Activated B cell treated with CpG ODN at 0.5 μM for 24 hours (primary cell): ENCODE measurements at regions of chr6 and their contacts with region 1.

Region 1: DNA sequence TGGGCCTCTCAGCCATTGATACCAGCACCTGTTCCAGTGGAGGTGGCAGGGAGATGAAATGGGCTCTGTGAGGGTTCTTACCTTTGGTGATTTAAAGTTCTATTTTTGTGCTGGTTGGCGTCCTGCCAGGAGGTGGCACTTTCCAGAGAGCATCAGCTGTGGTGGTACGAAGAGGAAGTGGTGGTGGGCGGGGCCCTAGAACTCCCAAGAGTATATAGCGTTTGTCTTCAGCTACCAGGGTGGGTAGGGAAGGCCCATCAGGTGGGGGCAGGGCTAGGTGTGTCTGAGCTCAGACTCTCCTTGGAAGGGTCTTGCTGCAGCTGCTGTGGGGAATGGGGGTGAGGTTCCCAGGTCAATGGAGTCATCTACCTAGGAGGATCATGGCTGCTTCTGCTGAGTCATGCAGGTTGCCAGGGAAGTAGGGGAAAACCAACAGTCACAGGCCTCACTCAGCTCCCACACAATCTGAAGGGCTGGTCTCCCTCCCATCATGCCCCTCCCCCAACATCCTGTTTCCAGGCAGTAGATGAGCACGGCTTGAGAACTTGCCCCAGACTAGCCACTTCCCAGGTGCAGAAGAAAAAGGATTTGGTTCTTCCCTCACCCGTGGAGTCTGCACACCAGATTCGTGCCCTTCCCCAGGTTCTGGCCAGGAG is 46.6 kb downstream of the MOXD1 start:
- DNase-seq: peak; percentile 80
- ATAC-seq: peak; percentile 92
- H3K4me3 Mint-ChIP-seq: peak overlapping the region; percentile 77
- H3K27ac Mint-ChIP-seq: peak overlapping the region; percentile 92
- H3K4me1 Mint-ChIP-seq: peaks cover 74% of the 10 kb centered on the region
- H3K27me3 Mint-ChIP-seq: no peaks in the 10 kb centered on the region
- CTCF ChIP-seq: no peak

Region 2: DNA sequence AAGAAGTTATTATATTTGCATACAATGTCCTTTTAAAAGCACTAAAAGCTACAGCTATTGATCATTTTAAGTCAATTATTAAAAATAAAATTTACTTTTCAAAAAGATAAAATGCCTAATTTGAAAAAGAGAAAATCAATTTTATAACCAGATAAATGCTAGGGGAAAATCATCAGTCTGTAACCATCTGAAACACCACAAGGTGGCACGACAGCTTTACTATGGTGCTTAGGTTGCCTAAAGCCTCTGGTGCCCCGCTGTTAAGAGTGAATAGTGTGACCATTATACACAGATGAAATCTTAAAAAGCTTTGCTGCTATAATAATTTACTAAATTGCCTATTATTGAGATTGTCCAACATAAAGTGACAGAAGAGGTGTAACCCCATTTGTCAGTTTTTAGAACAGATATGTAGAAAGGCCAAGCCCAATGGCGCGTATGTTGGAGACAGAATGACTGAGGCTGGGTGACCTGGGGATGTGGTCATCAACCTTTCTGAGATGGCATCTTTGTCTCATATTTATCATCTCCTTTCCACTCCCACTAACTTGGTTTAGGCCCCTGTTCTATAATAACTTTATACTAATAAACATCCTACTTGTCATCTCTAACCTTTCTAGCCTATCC is 54.2 kb before region 1 on chr6:
- CTCF ChIA-PET with region 1: interaction called, 14 read pairs
- POLR2A ChIA-PET with region 1: interaction called, 3 read pairs
- intact Hi-C with region 1: loop called (anchors 1 kb)
- DNase-seq: no peak
- ATAC-seq: peak; percentile 98
- H3K4me3 Mint-ChIP-seq: no peak overlapping the region
- H3K27ac Mint-ChIP-seq: no peak overlapping the region
- H3K4me1 Mint-ChIP-seq: no peaks in the 10 kb centered on the region
- H3K27me3 Mint-ChIP-seq: no peaks in the 10 kb centered on the region
- CTCF ChIP-seq: peak; percentile 67

Region 3: DNA sequence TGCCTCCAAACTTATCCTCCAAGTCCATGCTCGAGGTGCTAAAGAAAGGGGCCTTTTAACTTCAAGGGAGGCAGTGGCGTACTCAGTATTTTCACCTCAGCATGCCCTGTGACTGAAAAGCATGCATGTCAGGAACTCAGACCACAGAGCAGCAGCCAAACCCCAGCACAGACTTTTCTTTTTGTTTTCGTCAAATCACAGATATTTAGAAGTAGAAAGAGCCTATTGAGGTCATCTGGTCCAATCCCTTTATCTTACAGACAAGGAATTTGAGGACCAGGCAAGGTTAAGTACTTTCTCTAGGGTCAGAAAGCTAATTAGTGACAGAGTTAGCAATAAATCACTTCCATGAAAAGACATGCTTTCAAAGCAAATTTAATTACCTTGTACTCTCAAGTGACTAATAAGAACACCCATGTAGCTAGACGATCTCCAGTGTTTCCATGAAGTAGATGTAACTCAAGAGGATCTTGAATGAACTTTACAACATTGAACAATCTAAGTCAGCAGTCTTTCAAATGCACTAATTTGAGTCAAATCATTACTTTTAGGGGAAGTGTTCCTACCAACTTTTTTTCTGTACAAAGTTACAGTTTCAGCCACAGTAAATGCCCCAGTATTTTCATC is 10.8 kb after region 1 on chr6:
- CTCF ChIA-PET with region 1: interaction called, 6 read pairs
- POLR2A ChIA-PET with region 1: interaction called, 20 read pairs
- intact Hi-C with region 1: loop called (anchors 1 kb)
- DNase-seq: no peak
- ATAC-seq: peak; percentile 83
- H3K4me3 Mint-ChIP-seq: peak overlapping the region; percentile 44
- H3K27ac Mint-ChIP-seq: peak overlapping the region; percentile 82
- H3K4me1 Mint-ChIP-seq: peaks cover 61% of the 10 kb centered on the region
- H3K27me3 Mint-ChIP-seq: no peaks in the 10 kb centered on the region
- CTCF ChIP-seq: no peak

Region 4: GRCh38 chr6:132380358-132381029 is 25.9 kb after region 1 on chr6:
- CTCF ChIA-PET with region 1: interaction called, 9 read pairs
- POLR2A ChIA-PET with region 1: interaction called, 9 read pairs
- intact Hi-C with region 1: loop called (anchors 1 kb)
- DNase-seq: no peak
- ATAC-seq: no peak
- H3K4me3 Mint-ChIP-seq: no peak overlapping the region
- H3K27ac Mint-ChIP-seq: no peak overlapping the region
- H3K4me1 Mint-ChIP-seq: peaks cover 23% of the 10 kb centered on the region
- H3K27me3 Mint-ChIP-seq: no peaks in the 10 kb centered on the region
- CTCF ChIP-seq: no peak

Region 5: GRCh38 chr6:132391391-132392271 is 37.0 kb after region 1 on chr6:
- CTCF ChIA-PET with region 1: interaction called, 32 read pairs
- POLR2A ChIA-PET with region 1: interaction called, 15 read pairs
- intact Hi-C with region 1: loop called (anchors 1 kb)
- DNase-seq: no peak
- ATAC-seq: no peak
- H3K4me3 Mint-ChIP-seq: no peak overlapping the region
- H3K27ac Mint-ChIP-seq: no peak overlapping the region
- H3K4me1 Mint-ChIP-seq: peaks cover 29% of the 10 kb centered on the region
- H3K27me3 Mint-ChIP-seq: peaks cover 4% of the 10 kb centered on the region
- CTCF ChIP-seq: no peak

Region 6: DNA sequence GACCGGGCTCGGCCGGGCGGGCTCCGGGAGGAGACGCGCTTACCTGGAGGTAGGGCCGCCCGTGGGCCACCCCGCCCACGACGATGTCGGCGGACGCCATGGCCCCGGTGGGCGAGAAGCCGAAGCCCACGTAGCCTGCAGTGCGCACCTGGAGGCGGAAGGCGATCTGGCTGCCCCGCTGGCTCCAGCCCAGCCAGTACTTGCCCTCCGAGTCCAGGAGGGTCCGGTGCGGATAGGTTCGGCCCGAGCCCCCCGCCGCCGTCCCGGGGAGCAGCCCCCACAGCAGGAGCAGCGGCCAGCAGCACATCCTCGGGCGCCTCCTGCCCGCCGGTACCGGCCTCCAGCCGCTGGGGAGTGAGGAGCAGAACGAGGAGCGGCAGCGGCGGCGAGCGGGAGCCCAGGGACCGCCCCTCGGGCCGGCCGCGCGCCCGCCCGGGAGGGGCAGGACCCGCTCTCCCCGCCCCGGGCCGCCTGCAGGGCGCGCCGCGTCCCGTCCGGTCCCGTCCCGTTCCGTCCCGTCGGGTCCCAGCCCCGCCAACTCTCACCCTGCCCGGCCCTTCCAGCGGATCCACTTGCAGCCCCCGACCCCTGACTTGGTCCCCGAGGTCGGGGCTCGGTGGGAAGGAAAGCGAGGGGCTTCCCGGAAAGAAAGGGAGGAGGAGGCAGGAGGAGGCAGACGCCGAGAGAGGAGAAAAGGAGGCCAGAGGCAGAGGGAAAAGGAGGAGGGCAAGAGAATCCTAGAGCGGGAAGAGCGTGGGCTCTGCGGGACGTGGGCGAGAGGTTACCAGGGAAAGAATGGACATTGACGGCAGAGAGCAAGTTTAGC is 46.7 kb after region 1 on chr6 and contains the start of gene MOXD1:
- CTCF ChIA-PET with region 1: no interaction called
- POLR2A ChIA-PET with region 1: no interaction called
- intact Hi-C with region 1: loop called (anchors 2 kb)
- DNase-seq: peak; percentile 61
- ATAC-seq: peak; percentile 77
- H3K4me3 Mint-ChIP-seq: peak within 1 kb of the TSS; percentile 88
- H3K27ac Mint-ChIP-seq: peak within 1 kb of the TSS; percentile 42
- H3K4me1 Mint-ChIP-seq: peaks cover 31% of the 10 kb centered on the region
- H3K27me3 Mint-ChIP-seq: peaks cover 7% of the 10 kb centered on the region
- CTCF ChIP-seq: no peak
- total RNA-seq, gene MOXD1: 3.2 and 3.7 TPM in 2 replicates

Region 7: GRCh38 chr6:132456700-132457143 is 102.1 kb after region 1 on chr6:
- CTCF ChIA-PET with region 1: no interaction called
- POLR2A ChIA-PET with region 1: interaction called, 3 read pairs
- intact Hi-C with region 1: loop called (anchors 5 kb)
- DNase-seq: no peak
- ATAC-seq: peak; percentile 28
- H3K4me3 Mint-ChIP-seq: no peak overlapping the region
- H3K27ac Mint-ChIP-seq: peak overlapping the region; percentile 62
- H3K4me1 Mint-ChIP-seq: peaks cover 28% of the 10 kb centered on the region
- H3K27me3 Mint-ChIP-seq: no peaks in the 10 kb centered on the region
- CTCF ChIP-seq: no peak